Naive thymus-derived CD4-positive, alpha-beta T cell (primary cell): ENCODE measurements at regions of chr3 and their contacts with region 1.

Region 1: DNA sequence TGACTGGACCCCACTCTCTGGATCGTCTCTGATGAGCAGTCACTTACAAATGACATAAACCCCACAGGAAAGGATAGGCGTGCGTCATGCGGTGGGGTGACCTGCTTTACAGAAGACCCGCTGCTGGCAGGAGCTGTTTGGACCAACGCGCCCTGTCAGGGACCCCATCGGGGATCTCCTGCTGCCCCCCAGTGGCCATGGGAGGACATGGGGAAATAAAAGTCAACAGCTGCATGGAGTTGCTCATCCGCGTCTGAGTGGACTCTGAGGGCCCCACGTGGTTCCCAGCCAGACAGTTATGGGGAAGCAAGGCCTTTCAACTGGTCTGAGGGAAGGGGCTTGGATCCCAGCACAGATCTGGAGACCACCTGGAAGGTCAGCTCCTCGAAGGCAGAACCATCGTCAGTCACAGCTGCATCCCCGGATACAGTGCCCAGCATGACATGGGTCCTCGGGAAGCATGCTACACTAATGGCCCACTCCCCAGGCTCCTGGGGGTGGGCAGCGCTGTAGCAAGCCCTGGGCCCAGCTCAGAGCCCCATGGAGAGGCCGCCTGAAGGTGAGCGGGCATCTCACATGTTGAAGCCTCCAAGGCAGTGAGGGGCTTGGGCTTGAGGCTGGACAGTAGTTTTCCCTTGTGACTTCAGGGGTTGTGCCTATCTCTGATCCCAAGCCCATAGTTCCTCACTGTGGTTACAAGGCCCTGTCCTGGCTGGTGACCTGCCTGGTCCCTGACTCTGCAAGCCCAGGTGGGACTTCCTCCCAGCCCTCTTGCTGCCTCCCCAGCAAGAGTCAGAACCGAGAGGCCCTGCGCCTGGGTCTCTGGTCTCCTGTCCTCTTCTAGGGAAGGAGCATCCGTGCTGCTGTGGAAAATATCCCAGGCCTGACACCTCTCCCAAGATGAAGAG is 32.3 kb downstream of the PTH1R start:
- DNase-seq: peak; percentile 42 to 76 (median 64)
- ATAC-seq: peak; percentile 89
- H3K4me3 ChIP-seq: no peak overlapping the region
- H3K4me3 Mint-ChIP-seq: no peak overlapping the region
- H3K27ac ChIP-seq: no peak overlapping the region
- H3K27ac Mint-ChIP-seq: peak overlapping the region in 1 of 9 donors; percentile 6
- H3K4me1 ChIP-seq: peaks cover 11 to 17% of the 10 kb centered on the region in 2 donors
- H3K4me1 Mint-ChIP-seq: peaks cover 8 to 19% (median 17%) of the 10 kb centered on the region in 7 donors
- H3K27me3 ChIP-seq: no peaks in the 10 kb centered on the region
- H3K27me3 Mint-ChIP-seq: no peaks in the 10 kb centered on the region

Region 2: GRCh38 chr3:46663591-46664135 is 246.1 kb before region 1 on chr3:
- CTCF ChIA-PET with region 1: interaction called, 3 read pairs
- POLR2A ChIA-PET with region 1: no interaction called
- intact Hi-C with region 1: loop called in 1 of 2 experiments (anchors 1 kb)
- DNase-seq: peak in 6 of 9 donors; percentile 7 to 21 (median 10)
- ATAC-seq: peak; percentile 40
- H3K4me3 ChIP-seq: no peak overlapping the region
- H3K4me3 Mint-ChIP-seq: no peak overlapping the region
- H3K27ac ChIP-seq: no peak overlapping the region
- H3K27ac Mint-ChIP-seq: peak overlapping the region in 1 of 9 donors; percentile 49
- H3K4me1 ChIP-seq: no peaks in the 10 kb centered on the region
- H3K4me1 Mint-ChIP-seq: peaks cover 0 to 9% (median 7%) of the 10 kb centered on the region in 7 donors
- H3K27me3 ChIP-seq: no peaks in the 10 kb centered on the region
- H3K27me3 Mint-ChIP-seq: peaks cover 0 to 6% (median 0%) of the 10 kb centered on the region in 5 donors

Region 3: DNA sequence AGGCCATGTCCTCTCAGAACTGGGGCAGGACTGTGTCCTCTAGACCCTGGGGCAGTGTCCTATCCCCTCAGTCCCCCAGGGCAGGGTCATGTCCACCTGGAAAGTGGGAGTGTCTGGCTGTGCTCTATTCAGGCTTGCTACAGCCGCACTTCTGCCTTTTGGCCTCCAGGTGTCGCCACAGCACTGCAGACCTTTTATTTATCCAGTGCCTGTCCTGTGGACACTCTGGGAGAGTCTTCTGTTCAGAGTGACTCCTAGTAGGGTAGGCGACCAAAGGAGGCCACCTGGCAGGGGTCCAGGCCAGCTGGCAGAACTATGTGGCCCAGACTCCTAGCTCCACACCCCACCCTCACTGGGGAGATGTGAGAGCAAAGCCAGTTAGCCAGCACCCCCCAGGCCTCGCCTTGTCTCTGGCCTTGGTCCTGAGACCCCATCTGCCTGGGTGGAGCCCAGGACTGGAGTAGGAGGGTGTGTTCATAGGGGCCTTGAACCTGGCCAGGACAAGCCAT is 204.7 kb before region 1 on chr3:
- CTCF ChIA-PET with region 1: interaction called, 3 read pairs
- POLR2A ChIA-PET with region 1: no interaction called
- intact Hi-C with region 1: loop called (anchors 1 kb)
- DNase-seq: peak; percentile 45 to 71 (median 63)
- ATAC-seq: peak; percentile 87
- H3K4me3 ChIP-seq: no peak overlapping the region
- H3K4me3 Mint-ChIP-seq: no peak overlapping the region
- H3K27ac ChIP-seq: no peak overlapping the region
- H3K27ac Mint-ChIP-seq: peak overlapping the region in 1 of 9 donors; percentile 36
- H3K4me1 ChIP-seq: peaks cover 0 to 19% of the 10 kb centered on the region in 2 donors
- H3K4me1 Mint-ChIP-seq: peaks cover 0 to 29% (median 20%) of the 10 kb centered on the region in 7 donors
- H3K27me3 ChIP-seq: no peaks in the 10 kb centered on the region
- H3K27me3 Mint-ChIP-seq: peaks cover 0 to 25% (median 0%) of the 10 kb centered on the region in 5 donors

Region 4: GRCh38 chr3:46845791-46846623 is 63.8 kb before region 1 on chr3:
- CTCF ChIA-PET with region 1: no interaction called
- POLR2A ChIA-PET with region 1: no interaction called
- intact Hi-C with region 1: loop called in 1 of 2 experiments (anchors 1 kb)
- DNase-seq: peak; percentile 69 to 83 (median 78)
- ATAC-seq: peak; percentile 97
- H3K4me3 ChIP-seq: peak overlapping the region; percentile 66
- H3K4me3 Mint-ChIP-seq: peak overlapping the region; percentile 50 to 91 (median 82)
- H3K27ac ChIP-seq: peak overlapping the region; percentile 65
- H3K27ac Mint-ChIP-seq: peak overlapping the region in 6 of 9 donors; percentile 20 to 75 (median 60)
- H3K4me1 ChIP-seq: peaks cover 0 to 11% of the 10 kb centered on the region in 2 donors
- H3K4me1 Mint-ChIP-seq: peaks cover 0 to 14% (median 5%) of the 10 kb centered on the region in 7 donors
- H3K27me3 ChIP-seq: no peaks in the 10 kb centered on the region
- H3K27me3 Mint-ChIP-seq: peaks cover 0 to 36% (median 0%) of the 10 kb centered on the region in 5 donors

Region 5: DNA sequence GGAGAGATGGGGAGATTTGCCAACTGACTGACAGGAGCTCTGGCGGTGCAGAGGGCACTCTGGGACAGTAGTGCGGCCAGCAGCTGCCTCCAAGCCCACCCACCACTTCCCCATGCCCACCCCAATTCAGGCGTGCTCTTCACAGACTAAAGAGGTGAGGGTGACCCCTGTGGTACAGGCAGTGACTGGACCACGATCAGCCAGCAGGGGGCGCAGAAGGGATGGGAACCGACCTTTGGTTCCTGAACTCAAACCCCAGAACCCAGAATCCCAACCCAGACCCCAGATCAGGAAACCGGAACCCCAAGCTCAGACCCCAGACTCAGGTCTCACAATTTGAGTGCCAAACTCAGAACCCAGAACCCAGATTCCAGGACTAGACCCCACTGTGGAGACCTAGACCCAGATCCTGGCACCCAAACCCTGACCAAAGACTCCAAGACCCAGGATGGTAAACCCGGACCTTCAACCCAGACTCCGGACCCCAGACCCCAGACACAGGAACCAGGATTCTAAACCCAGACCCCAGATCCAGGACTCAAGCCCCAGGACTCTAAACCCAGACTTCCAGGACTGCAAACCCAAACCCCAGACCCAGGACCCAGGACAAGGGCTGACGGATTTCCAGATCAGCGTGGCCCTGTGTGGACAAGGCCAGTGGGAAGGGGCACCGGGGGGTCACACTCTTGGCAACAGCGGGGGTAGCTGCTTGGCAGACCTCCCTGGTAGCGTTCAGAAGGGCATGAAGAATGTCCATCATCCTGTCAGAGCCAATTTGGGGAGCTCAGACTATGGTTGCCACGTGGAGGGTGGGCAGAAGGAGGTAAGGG is 42.9 kb before region 1 on chr3:
- CTCF ChIA-PET with region 1: interaction called, 8 read pairs
- POLR2A ChIA-PET with region 1: no interaction called
- intact Hi-C with region 1: loop called (anchors 1 kb)
- DNase-seq: peak; percentile 38 to 80 (median 66)
- ATAC-seq: peak; percentile 69
- H3K4me3 ChIP-seq: no peak overlapping the region
- H3K4me3 Mint-ChIP-seq: no peak overlapping the region
- H3K27ac ChIP-seq: no peak overlapping the region
- H3K27ac Mint-ChIP-seq: peak overlapping the region in 1 of 9 donors; percentile 21
- H3K4me1 ChIP-seq: no peaks in the 10 kb centered on the region
- H3K4me1 Mint-ChIP-seq: no peaks in the 10 kb centered on the region
- H3K27me3 ChIP-seq: no peaks in the 10 kb centered on the region
- H3K27me3 Mint-ChIP-seq: peaks cover 0 to 8% (median 0%) of the 10 kb centered on the region in 5 donors

Region 6: GRCh38 chr3:47016934-47017435 is 107.2 kb after region 1 on chr3:
- CTCF ChIA-PET with region 1: no interaction called
- POLR2A ChIA-PET with region 1: no interaction called
- intact Hi-C with region 1: no loop called
- DNase-seq: peak in 1 of 9 donors; percentile 50
- ATAC-seq: peak; percentile 79
- H3K4me3 ChIP-seq: no peak overlapping the region
- H3K4me3 Mint-ChIP-seq: peak overlapping the region in 1 of 10 donors; percentile 56
- H3K27ac ChIP-seq: peak overlapping the region; percentile 17
- H3K27ac Mint-ChIP-seq: peak overlapping the region; percentile 53 to 93 (median 79)
- H3K4me1 ChIP-seq: peaks cover 7 to 18% of the 10 kb centered on the region in 2 donors
- H3K4me1 Mint-ChIP-seq: peaks cover 25 to 61% (median 34%) of the 10 kb centered on the region in 7 donors
- H3K27me3 ChIP-seq: no peaks in the 10 kb centered on the region
- H3K27me3 Mint-ChIP-seq: no peaks in the 10 kb centered on the region